ENCODE measurements at regions of chrX and their contacts with region 1.

Region 1: GRCh38 chrX:1246816-1247215 is 21.8 kb upstream of the CSF2RA start:
- DNase-seq: peak; percentile 44 to 60 (median 52)
- ATAC-seq: peak; percentile 72
- H3K4me3 ChIP-seq: no peak overlapping the region
- H3K27ac ChIP-seq: no peak overlapping the region
- H3K4me1 ChIP-seq: peaks cover 0 to 3% of the 10 kb centered on the region in 2 experiments; a peak in 1 of 5 replicates
- H3K27me3 ChIP-seq: no peaks in the 10 kb centered on the region; a peak in 1 of 5 replicates
- CTCF ChIP-seq: peak; percentile 63 to 71 (median 66)
- EP300 ChIP-seq: no peak
- POLR2A ChIP-seq: no peak
- RAD21 ChIP-seq: peak; percentile 27 to 63; a peak in 3 of 4 replicates

Region 2: GRCh38 chrX:856566-857290 is 390.1 kb before region 1 on chrX:
- CTCF ChIA-PET with region 1: no interaction called
- POLR2A ChIA-PET with region 1: no interaction called
- in situ Hi-C with region 1: no loop called
- intact Hi-C with region 1: no loop called
- DNase-seq: no peak
- ATAC-seq: no peak
- H3K4me3 ChIP-seq: no peak overlapping the region
- H3K27ac ChIP-seq: no peak overlapping the region
- H3K4me1 ChIP-seq: no peaks in the 10 kb centered on the region
- H3K27me3 ChIP-seq: no peaks in the 10 kb centered on the region
- CTCF ChIP-seq: no peak
- EP300 ChIP-seq: no peak
- POLR2A ChIP-seq: no peak
- RAD21 ChIP-seq: no peak

Region 3: GRCh38 chrX:1086444-1087409 is 160.1 kb before region 1 on chrX:
- CTCF ChIA-PET with region 1: no interaction called
- POLR2A ChIA-PET with region 1: no interaction called
- in situ Hi-C with region 1: no loop called
- intact Hi-C with region 1: no loop called
- DNase-seq: no peak
- ATAC-seq: no peak
- H3K4me3 ChIP-seq: no peak overlapping the region
- H3K27ac ChIP-seq: no peak overlapping the region
- H3K4me1 ChIP-seq: no peaks in the 10 kb centered on the region
- H3K27me3 ChIP-seq: peaks cover 0 to 5% of the 10 kb centered on the region in 2 experiments; a peak in 1 of 5 replicates
- CTCF ChIP-seq: no peak
- EP300 ChIP-seq: no peak
- POLR2A ChIP-seq: no peak
- RAD21 ChIP-seq: no peak

Region 4: DNA sequence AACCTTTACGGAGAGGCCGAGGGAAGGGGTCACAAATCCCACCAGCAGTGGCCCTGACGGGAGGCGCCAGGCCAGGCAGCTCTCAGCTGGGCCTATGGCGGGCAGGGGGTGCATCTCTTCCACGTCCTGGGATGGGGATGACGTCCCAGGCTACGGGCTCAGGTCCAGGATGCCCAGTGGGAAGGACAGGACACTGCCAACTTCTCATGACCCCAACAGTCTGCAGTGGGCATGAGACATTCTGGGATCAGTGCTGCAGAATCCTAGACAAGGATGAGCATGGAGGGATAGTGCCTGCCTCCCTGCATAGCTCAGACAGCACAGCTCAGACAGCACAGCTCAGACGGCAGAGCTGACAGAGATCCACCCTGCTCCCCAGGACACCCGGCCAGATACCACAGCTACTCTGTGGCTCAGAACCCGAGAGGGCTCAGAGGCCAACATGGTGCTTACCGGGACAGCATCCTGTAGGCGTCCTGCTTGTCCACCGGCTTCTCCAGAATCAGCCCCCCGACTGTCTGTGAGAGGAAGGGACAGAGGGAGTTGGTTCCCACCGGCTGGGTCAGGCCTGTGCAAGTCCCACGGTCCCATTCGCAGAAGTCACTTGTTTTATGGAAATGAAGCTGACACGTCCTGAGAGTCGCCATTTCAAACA is 188.6 kb after region 1 on chrX:
- CTCF ChIA-PET with region 1: no interaction called
- POLR2A ChIA-PET with region 1: no interaction called
- in situ Hi-C with region 1: loop called (anchors 10 kb)
- intact Hi-C with region 1: no loop called
- DNase-seq: no peak
- ATAC-seq: no peak
- H3K4me3 ChIP-seq: no peak overlapping the region
- H3K27ac ChIP-seq: no peak overlapping the region
- H3K4me1 ChIP-seq: peaks cover 0 to 4% of the 10 kb centered on the region in 2 experiments; a peak in 2 of 5 replicates
- H3K27me3 ChIP-seq: no peaks in the 10 kb centered on the region
- CTCF ChIP-seq: no peak
- EP300 ChIP-seq: no peak
- POLR2A ChIP-seq: no peak
- RAD21 ChIP-seq: no peak